Activated B cell treated with CpG ODN at 0.5 μM for 24 hours (primary cell): ENCODE measurements at regions of chr3 and their contacts with region 1.

Region 1: DNA sequence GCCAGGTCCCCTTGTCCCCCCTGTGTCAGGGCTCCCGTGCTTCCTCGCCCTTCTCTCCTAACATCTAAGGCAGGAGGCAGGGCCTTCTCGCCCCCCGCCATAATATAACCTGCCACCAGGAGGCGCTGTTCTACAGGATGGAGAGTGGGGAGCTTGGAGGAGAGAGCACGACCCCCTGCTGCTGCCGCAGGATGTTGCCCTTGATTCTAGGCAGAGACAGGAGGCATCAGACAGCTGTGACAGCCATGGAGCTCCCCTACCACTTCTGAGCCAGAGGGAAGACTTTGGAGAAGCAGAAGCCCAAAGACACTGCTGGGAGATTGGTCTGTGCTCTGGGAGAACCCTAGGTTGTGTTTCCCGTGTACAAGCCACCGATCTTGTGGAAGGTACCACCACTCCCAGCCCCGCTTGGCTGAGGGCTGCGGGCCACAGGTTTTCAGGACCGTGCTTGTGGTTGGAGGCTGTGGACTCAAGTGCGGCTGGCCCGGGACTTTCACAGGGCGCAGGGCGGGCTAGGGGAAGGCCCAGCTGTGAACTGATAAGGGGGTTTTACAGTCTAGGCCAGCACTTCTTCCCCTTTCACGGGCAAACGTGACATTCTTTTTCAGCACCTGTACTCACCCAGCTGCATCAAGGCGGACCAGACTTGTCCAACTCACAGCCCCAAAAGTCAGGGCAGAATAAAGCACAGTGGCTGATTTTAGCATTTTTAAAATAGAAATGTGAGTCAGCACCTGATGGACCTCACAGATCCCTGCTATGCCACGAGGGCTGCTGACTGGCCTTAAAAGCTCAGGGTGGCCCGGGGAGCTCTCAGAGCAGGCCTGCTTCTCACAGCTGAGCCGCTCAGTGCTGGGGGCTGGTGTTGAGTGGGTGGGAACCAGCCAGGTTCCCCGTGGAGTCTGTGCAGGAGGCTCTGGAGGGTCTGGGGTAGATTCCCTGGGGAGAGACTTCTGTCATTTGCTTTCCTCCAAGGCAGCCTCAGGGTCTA is 2.6 kb upstream of the TIGIT start:
- DNase-seq: peak; percentile 88
- ATAC-seq: peak; percentile 85
- H3K4me3 Mint-ChIP-seq: peak overlapping the region; percentile 71
- H3K27ac Mint-ChIP-seq: peak overlapping the region; percentile 98
- H3K4me1 Mint-ChIP-seq: peaks cover 47% of the 10 kb centered on the region
- H3K27me3 Mint-ChIP-seq: no peaks in the 10 kb centered on the region
- CTCF ChIP-seq: peak; percentile 83

Region 2: GRCh38 chr3:113552851-113553250 is 738.4 kb before region 1 on chr3:
- CTCF ChIA-PET with region 1: no interaction called
- POLR2A ChIA-PET with region 1: no interaction called
- intact Hi-C with region 1: no loop called
- DNase-seq: no peak
- ATAC-seq: peak; percentile 84
- H3K4me3 Mint-ChIP-seq: no peak overlapping the region
- H3K27ac Mint-ChIP-seq: no peak overlapping the region
- H3K4me1 Mint-ChIP-seq: peaks cover 17% of the 10 kb centered on the region
- H3K27me3 Mint-ChIP-seq: no peaks in the 10 kb centered on the region
- CTCF ChIP-seq: no peak

Region 3: GRCh38 chr3:113736548-113737089 is 554.6 kb before region 1 on chr3:
- CTCF ChIA-PET with region 1: no interaction called
- POLR2A ChIA-PET with region 1: no interaction called
- intact Hi-C with region 1: loop called (anchors 5 kb)
- DNase-seq: no peak
- ATAC-seq: peak; percentile 86
- H3K4me3 Mint-ChIP-seq: no peak overlapping the region
- H3K27ac Mint-ChIP-seq: peak overlapping the region; percentile 76
- H3K4me1 Mint-ChIP-seq: peaks cover 40% of the 10 kb centered on the region
- H3K27me3 Mint-ChIP-seq: no peaks in the 10 kb centered on the region
- CTCF ChIP-seq: no peak

Region 4: DNA sequence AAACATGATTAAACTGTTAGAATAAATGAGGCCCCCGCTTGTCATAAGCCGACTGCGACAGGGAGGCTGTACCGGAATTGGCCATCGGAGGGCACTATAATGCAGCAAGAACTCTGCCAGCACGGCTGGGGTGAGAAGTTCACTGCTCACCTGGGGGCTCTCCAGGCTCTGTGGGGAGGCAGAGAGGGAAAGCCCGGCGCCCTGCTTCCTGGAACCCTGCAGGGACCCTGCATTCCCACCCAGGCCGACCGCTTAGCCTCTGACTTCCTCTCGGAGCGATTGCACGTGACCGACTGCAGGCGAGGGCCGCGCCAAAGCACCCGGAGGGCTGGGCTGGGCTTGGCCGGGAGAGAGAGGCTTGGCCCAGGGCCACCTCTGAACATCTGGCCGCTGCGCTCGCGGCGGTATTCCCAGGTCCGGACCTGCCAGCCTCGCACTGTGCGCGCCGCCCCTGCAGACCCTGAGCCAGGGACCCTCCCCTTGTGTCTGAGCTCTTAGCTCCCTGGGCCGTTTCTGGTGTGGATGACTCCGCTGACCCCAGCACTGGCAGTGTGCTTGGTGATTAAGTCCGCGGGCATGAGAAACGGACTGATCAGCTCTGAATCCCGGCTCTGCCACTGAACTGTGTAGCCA is 138.6 kb before region 1 on chr3:
- CTCF ChIA-PET with region 1: interaction called, 15 read pairs
- POLR2A ChIA-PET with region 1: interaction called, 9 read pairs
- intact Hi-C with region 1: loop called (anchors 1 kb)
- DNase-seq: peak; percentile 78
- ATAC-seq: peak; percentile 98
- H3K4me3 Mint-ChIP-seq: peak overlapping the region; percentile 68
- H3K27ac Mint-ChIP-seq: peak overlapping the region; percentile 47
- H3K4me1 Mint-ChIP-seq: peaks cover 11% of the 10 kb centered on the region
- H3K27me3 Mint-ChIP-seq: no peaks in the 10 kb centered on the region
- CTCF ChIP-seq: peak; percentile 18

Region 5: GRCh38 chr3:114223143-114223542 is 68.1 kb before region 1 on chr3:
- CTCF ChIA-PET with region 1: interaction called, 36 read pairs
- POLR2A ChIA-PET with region 1: interaction called, 334 read pairs
- intact Hi-C with region 1: loop called (anchors 1 kb)
- DNase-seq: no peak
- ATAC-seq: peak; percentile 60
- H3K4me3 Mint-ChIP-seq: peak overlapping the region; percentile 44
- H3K27ac Mint-ChIP-seq: no peak overlapping the region
- H3K4me1 Mint-ChIP-seq: peaks cover 23% of the 10 kb centered on the region
- H3K27me3 Mint-ChIP-seq: no peaks in the 10 kb centered on the region
- CTCF ChIP-seq: no peak

Region 6: DNA sequence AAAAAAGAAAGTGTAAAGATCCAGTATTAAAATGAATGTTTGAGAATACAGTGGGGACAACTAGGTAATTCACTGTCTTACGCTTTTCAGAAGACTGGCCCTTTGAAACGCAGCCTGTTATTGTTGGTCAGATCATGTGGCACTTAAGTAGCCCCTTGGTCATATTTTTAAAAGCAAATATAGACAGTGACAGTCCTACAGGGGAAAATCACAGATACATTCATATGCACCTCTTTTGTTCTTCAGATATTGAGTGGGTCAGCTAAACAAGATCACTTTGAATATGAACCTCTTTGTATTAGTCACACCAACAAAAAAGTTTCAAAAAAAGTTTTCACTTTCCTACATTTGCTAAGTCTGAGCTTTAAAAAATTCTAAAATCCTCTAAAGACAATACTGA is 38.6 kb after region 1 on chr3:
- CTCF ChIA-PET with region 1: interaction called, 18 read pairs
- POLR2A ChIA-PET with region 1: interaction called, 15 read pairs
- intact Hi-C with region 1: loop called (anchors 1 kb)
- DNase-seq: no peak
- ATAC-seq: no peak
- H3K4me3 Mint-ChIP-seq: no peak overlapping the region
- H3K27ac Mint-ChIP-seq: peak overlapping the region; percentile 35
- H3K4me1 Mint-ChIP-seq: peaks cover 72% of the 10 kb centered on the region
- H3K27me3 Mint-ChIP-seq: no peaks in the 10 kb centered on the region
- CTCF ChIP-seq: no peak

Region 7: DNA sequence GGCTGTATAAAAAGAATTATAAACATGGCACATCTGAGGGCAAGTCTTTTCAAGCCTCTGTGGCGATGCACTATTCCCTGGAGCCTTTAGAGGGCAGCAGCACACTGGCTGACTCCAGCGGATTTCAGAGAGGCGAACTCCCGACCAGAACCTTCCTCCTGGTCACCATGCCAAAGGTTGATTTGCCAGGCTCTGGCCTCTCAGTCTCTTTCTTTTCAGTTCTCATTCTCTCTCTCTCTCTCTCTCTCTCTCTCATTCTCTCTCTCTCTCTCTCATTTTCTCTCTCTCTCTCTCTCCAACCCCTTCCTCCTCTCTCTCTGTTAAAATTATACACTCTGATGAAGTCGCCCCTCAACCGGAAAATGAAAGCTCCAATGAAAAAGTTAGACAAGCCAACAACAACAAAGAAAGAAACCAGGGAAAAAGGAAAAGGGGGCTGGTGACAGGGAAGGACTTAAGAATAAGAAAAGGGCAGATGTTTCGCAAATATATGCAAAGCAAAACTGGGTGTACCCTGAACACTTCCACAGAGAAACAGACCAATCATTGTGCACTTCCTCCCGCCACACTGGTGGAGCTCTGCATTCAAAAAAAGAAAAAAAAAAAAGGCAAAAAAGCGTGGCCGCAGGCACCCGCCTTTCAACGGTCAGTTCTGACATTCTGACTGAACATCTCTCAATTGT is 92.8 kb after region 1 on chr3:
- CTCF ChIA-PET with region 1: interaction called, 19 read pairs
- POLR2A ChIA-PET with region 1: interaction called, 3 read pairs
- intact Hi-C with region 1: loop called (anchors 1 kb)
- DNase-seq: peak; percentile 40
- ATAC-seq: peak; percentile 98
- H3K4me3 Mint-ChIP-seq: no peak overlapping the region
- H3K27ac Mint-ChIP-seq: no peak overlapping the region
- H3K4me1 Mint-ChIP-seq: peaks cover 4% of the 10 kb centered on the region
- H3K27me3 Mint-ChIP-seq: no peaks in the 10 kb centered on the region
- CTCF ChIP-seq: peak; percentile 68

Region 8: DNA sequence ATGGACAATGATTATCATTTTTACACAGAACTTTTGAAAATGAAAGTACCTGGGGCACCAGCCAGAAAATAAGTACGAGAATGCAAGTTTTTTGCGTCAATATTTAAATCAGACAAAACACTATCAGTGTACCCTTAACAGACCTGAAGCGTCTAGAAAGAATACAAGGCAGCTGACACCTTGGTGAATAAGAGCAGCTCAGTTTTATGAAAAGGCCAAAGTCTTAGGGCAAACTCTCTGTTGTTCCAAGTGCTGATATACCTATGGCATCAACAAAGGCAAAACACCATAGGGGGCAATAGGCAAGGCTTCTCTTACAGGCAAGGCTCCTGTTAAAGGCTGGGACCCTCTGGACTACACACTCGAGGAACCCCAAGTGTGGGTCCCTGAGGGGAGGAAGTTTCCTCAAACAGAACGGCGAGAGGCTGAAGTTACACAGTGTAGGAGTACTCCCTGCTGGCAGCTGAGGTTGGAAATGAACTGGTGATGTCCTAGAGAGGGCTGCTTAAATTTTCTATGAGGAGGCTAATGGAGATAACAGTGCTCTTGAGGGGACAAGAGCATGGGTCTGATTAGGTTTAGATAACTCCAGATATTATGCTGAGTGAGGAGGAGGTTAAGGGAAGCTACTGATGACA is 293.6 kb after region 1 on chr3:
- CTCF ChIA-PET with region 1: interaction called, 3 read pairs
- POLR2A ChIA-PET with region 1: no interaction called
- intact Hi-C with region 1: loop called (anchors 1 kb)
- DNase-seq: no peak
- ATAC-seq: peak; percentile 73
- H3K4me3 Mint-ChIP-seq: peak overlapping the region; percentile 63
- H3K27ac Mint-ChIP-seq: peak overlapping the region; percentile 76
- H3K4me1 Mint-ChIP-seq: peaks cover 23% of the 10 kb centered on the region
- H3K27me3 Mint-ChIP-seq: no peaks in the 10 kb centered on the region
- CTCF ChIP-seq: no peak